ENCODE measurements at regions of chr2 and their contacts with region 1.

Region 1: DNA sequence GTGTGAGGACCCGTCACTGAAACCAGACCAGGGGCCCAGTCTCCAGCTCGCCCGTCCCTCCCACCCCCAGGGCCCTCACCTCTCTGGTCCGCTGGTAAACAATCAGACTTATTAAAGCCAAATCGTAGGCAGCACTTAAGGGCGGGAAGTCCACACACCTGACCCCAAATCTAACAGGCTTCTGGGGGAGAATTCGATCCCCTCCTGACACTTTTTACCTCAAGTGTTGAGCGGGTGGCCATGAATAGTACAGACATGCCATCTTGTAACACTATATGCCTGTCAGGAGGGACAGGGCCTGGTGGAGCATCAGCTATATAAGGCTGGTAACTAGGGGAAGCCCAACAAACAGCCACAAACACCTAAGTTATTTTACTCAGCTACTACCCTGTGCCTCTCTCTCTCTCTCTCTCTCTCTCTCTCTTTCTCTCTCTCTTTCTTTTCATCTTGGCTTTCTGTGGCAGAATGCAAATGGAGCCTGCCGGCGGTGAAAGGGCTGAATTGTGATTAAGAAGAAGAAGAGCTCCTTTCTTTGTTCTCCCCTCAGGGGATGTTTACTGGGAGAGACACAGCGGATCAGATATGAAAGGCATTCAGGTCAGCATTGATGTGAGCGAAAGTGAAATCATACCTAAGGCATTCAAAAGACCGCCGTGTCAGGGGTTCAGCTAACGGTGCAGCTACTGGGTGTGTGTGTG is 9.5 kb downstream of the ZEB2 start:
- DNase-seq: peak in 9 of 42 donors; percentile 16 to 76 (median 55)

Region 2: DNA sequence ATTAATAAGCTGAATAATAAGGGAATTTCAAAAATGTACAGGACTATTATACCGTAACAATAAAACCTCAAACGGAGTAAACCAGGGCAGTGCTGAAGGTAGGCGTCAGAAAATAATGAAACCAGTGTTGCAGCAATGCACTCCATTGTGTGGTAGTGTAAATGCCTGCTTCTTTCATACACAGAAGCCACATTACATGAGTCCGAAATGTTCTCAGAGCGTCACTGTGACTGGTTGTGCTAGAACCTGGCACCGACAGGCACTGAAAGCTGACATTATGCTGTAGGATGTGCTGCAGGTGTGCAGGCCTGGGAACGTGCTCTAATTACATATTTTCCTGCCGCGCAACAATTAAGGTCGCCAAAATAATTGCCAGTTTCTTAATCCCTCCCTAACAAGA is 43.8 kb before region 1 on chr2:
- intact Hi-C with region 1: loop called (anchors 5 kb)
- DNase-seq: peak; percentile 33 to 89 (median 69)

Measured in head of caudate nucleus (tissue), 42 donors.